H1 (cell line): ENCODE measurements at regions of chr1 and their contacts with region 1.

Region 1: GRCh38 chr1:116411784-116412479 is 38.9 kb downstream of the ATP1A1 start:
- DNase-seq: no peak
- H3K4me3 ChIP-seq: no peak overlapping the region
- H3K27ac ChIP-seq: no peak overlapping the region
- H3K4me1 ChIP-seq: peaks cover 0 to 6% (median 4%) of the 10 kb centered on the region in 4 experiments; a peak in 4 of 7 replicates
- H3K27me3 ChIP-seq: no peaks in the 10 kb centered on the region
- CTCF ChIP-seq: no peak
- EP300 ChIP-seq: no peak
- POLR2A ChIP-seq: no peak
- RAD21 ChIP-seq: no peak

Region 2: DNA sequence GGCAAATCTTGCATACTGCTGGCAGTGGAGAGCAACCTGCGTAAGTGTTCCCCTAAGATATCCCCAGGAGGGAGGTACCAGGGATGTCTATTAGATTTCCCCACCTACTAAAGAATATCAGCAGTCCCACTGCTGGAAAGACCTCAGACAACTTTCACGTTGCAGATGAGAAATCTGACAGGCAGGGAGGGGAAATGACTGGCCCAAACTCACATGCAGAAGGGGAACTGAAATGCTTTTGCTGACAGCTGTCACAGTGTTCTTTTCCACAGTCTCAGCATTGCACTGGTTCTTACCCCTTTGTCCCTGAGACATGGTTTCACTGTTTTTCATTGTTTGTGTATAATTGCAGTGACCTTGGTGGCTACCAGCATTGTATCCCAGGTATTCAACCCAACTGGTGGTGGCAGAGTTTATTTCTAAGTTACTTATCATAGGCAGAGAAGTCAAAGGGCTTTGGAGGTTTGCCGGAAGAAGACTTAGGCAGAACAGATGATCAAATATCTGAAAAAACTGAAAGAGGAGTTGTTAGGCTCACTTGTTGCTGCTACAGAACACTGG is 123.7 kb before region 1 on chr1:
- CTCF ChIA-PET with region 1: no interaction called
- POLR2A ChIA-PET with region 1: no interaction called
- DNase-seq: no peak
- H3K4me3 ChIP-seq: no peak overlapping the region
- H3K27ac ChIP-seq: no peak overlapping the region
- H3K4me1 ChIP-seq: no peaks in the 10 kb centered on the region
- H3K27me3 ChIP-seq: no peaks in the 10 kb centered on the region
- CTCF ChIP-seq: no peak
- EP300 ChIP-seq: no peak
- POLR2A ChIP-seq: no peak
- RAD21 ChIP-seq: no peak

Region 3: DNA sequence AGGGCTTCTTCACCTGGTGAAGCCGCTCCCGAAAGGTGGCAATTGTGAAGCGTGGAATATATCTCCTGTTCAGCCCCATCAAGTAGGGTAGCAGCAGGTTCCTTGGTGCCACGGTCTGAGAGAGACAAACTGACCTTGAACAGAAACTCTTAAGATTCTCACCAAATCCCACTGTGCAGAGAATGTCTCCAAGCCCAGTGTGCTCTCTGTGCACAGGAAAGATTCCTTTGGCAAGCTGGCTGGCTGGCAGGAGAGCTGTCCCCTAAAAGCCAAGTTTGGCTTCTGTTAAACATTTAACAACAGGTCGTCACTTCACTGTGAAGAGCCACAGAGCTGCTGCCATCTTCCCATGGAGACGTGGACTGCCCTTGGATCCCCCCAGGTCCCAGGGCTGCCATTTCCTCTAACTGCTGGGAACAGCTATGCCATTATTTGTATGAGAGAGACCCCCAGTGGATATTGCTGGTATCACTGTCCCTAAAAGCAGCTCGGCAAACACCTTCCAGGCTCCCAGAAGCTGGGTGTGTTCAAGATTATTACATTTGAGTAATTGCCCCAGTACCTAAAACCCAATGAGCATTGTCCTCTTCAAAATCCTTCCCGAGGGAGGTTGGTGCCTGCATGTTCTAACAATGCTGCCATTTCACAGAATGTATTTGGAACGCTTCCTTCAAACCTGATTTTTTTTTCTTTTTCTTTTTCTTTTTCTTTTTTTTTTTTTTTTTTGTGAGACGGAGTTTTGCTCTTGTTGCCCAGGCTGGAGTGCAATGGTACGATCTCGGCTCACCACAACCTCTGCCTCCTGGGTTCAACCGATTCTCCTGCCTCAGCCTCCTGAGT is 87.1 kb after region 1 on chr1:
- CTCF ChIA-PET with region 1: interaction called, 15 read pairs
- POLR2A ChIA-PET with region 1: no interaction called
- DNase-seq: peak; percentile 34 to 77
- H3K4me3 ChIP-seq: no peak overlapping the region
- H3K27ac ChIP-seq: no peak overlapping the region
- H3K4me1 ChIP-seq: no peaks in the 10 kb centered on the region; a peak in 1 of 7 replicates
- H3K27me3 ChIP-seq: no peaks in the 10 kb centered on the region
- CTCF ChIP-seq: peak; percentile 33 to 81 (median 78)
- EP300 ChIP-seq: no peak
- POLR2A ChIP-seq: no peak
- RAD21 ChIP-seq: peak; percentile 97

Region 4: GRCh38 chr1:116763787-116764465 is 352.0 kb after region 1 on chr1:
- CTCF ChIA-PET with region 1: no interaction called
- POLR2A ChIA-PET with region 1: no interaction called
- DNase-seq: peak in 1 of 2 experiments; percentile 66
- H3K4me3 ChIP-seq: no peak overlapping the region
- H3K27ac ChIP-seq: no peak overlapping the region
- H3K4me1 ChIP-seq: no peaks in the 10 kb centered on the region
- H3K27me3 ChIP-seq: no peaks in the 10 kb centered on the region
- CTCF ChIP-seq: peak; percentile 59 to 76 (median 65)
- EP300 ChIP-seq: no peak
- POLR2A ChIP-seq: no peak
- RAD21 ChIP-seq: peak; percentile 54 to 60